ENCODE measurements at regions of chr1 and their contacts with region 1.

Region 1: DNA sequence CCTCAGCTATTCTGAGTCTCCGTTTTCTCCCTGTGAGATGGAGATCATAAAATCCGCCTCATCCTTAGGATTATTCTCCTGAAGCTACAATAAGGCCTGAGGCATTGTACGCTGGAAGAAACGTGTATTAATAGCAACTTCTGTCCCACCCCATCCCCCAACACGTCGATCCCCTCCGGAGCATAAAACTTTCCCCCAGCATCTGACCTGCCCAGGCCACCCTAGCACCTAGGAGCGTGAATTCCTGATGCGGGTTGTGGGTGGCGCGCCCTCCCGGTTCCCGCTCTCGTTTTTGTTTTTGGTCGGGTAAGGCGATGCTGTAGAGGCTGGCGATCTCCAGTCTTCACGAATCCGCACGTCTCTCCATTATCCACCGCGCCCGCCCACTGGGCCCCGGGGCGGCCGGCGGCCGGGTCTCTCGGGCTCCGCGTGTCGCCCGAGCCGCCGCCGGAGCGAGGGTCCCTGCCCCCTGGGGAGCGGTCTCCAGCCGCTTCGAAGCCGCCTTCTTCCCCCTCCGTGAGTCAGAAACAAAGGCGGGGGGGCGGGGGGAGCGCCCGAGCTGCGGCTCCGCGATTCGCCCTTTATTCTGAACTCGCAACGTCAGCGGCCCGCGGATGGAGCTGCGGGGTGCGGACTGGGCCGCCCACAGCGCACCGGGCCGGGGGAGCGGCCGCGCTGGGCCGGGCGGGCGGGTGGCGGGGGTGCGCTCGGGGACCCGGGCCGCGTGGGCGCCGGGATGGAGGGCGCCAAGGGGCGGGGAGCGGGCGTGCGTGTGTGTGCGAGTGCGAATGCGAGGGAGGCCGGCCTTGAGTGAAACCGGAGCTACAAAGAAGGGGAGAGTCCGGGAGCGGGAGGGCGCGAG is at the start of gene PLEKHO1:
- DNase-seq: peak; percentile 71 to 89
- ATAC-seq: peak; percentile 70 to 83 (median 76)
- H3K4me3 ChIP-seq: peak within 1 kb of the TSS; percentile 79
- H3K4me3 Mint-ChIP-seq: peak within 1 kb of the TSS; percentile 96
- H3K27ac ChIP-seq: peak within 1 kb of the TSS; percentile 79
- H3K27ac Mint-ChIP-seq: peak within 1 kb of the TSS; percentile 88 to 95
- H3K4me1 ChIP-seq: peaks cover 32% of the 10 kb centered on the region
- H3K4me1 Mint-ChIP-seq: peaks cover 32 to 47% of the 10 kb centered on the region in 2 donors
- H3K27me3 ChIP-seq: no peaks in the 10 kb centered on the region
- H3K27me3 Mint-ChIP-seq: no peaks in the 10 kb centered on the region
- CTCF ChIP-seq: no peak
- total RNA-seq, gene PLEKHO1: 53.3 to 73.8 (median 64.6) TPM

Region 2: GRCh38 chr1:150110116-150110515 is 39.4 kb before region 1 on chr1:
- intact Hi-C with region 1: loop called (anchors 5 kb)
- DNase-seq: peak in 1 of 2 donors; percentile 47
- ATAC-seq: peak in 2 of 3 donors; percentile 55 to 65
- H3K4me3 ChIP-seq: peak overlapping the region; percentile 12
- H3K4me3 Mint-ChIP-seq: peak overlapping the region; percentile 84
- H3K27ac ChIP-seq: peak overlapping the region; percentile 63
- H3K27ac Mint-ChIP-seq: peak overlapping the region; percentile 85 to 91
- H3K4me1 ChIP-seq: peaks cover 10% of the 10 kb centered on the region
- H3K4me1 Mint-ChIP-seq: peaks cover 43 to 51% of the 10 kb centered on the region in 2 donors
- H3K27me3 ChIP-seq: no peaks in the 10 kb centered on the region
- H3K27me3 Mint-ChIP-seq: no peaks in the 10 kb centered on the region
- CTCF ChIP-seq: no peak

Region 3: DNA sequence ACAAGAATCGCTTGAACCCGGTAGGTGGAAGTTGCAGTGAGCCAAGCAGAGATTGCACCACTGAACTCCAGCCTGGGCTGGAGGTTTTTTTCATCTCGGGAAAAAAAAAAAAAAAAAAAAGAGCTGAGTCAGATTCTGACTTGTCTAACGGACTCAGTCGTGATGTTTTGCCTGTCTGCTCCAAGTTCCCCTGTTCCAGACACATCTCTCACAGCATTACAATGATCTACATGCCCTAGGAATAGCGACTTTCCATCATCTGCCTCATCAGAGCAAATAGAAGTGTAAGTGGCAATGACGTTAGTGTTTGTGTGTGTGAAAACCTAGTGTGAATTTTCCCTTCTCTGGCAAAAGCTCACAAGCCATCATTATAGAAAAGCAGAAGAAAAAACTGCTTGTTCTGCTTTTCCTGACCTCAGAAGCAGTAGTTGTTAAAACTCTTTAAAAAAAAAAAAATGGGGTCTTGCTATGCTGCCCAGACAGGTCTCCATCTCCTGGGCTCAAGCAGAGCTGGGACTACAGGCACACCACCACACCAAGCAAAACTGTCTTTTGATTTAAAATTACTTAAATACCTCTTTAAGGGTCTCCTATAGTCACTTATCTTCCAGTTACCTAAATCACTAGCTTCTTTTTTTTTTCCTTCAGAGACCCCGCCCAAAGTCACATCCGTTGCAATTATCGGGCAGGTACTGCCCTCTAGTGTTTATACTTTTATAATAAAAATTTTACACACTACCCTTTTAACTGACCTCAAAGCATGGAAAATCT is 37.5 kb after region 1 on chr1:
- intact Hi-C with region 1: loop called (anchors 5 kb)
- DNase-seq: peak; percentile 29 to 76
- ATAC-seq: peak; percentile 81 to 86 (median 82)
- H3K4me3 ChIP-seq: no peak overlapping the region
- H3K4me3 Mint-ChIP-seq: peak overlapping the region; percentile 69
- H3K27ac ChIP-seq: peak overlapping the region; percentile 50
- H3K27ac Mint-ChIP-seq: peak overlapping the region; percentile 85
- H3K4me1 ChIP-seq: peaks cover 17% of the 10 kb centered on the region
- H3K4me1 Mint-ChIP-seq: peaks cover 12 to 13% of the 10 kb centered on the region in 2 donors
- H3K27me3 ChIP-seq: no peaks in the 10 kb centered on the region
- H3K27me3 Mint-ChIP-seq: no peaks in the 10 kb centered on the region
- CTCF ChIP-seq: peak; percentile 63

Measured in natural killer cell (primary cell).